B cell (primary cell): ENCODE measurements at regions of chr10 and their contacts with region 1.

Region 1: DNA sequence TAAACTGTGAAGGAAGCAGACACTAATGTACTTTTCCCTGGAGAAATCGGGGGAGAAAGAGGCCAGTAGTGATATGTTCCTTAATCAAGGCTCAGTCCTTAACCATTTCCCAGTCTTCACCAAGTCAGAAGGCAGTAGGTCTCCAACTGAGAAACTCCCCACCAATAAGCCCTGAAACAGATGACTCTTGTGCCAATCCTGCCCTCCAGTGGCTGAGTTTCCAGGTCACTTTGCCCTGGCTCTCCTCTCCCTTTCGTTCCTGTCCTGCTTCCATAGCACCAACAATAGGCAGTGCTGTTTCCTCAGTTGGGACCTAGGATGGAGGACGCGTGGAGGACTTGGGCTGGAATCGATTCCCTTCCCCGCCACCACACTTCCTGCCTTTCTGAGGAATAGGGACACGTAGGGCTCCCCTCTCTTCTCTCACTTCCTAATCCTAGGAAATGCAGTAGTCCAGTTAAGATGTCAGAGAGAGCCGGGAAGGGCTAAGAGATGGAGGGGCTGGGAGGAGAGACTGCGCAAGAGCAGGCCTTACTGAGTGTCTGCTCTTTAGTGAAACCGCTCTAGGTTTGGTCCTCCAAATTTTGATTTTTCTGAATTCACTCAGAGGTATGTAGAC is 23.4 kb downstream of the ATOH7 start:
- DNase-seq: no peak
- ATAC-seq: no peak
- H3K4me3 ChIP-seq: no peak overlapping the region
- H3K4me3 Mint-ChIP-seq: no peak overlapping the region
- H3K27ac ChIP-seq: no peak overlapping the region
- H3K27ac Mint-ChIP-seq: no peak overlapping the region
- H3K4me1 ChIP-seq: no peaks in the 10 kb centered on the region
- H3K4me1 Mint-ChIP-seq: no peaks in the 10 kb centered on the region
- H3K27me3 ChIP-seq: no peaks in the 10 kb centered on the region
- H3K27me3 Mint-ChIP-seq: peaks cover 17% of the 10 kb centered on the region
- CTCF ChIP-seq: no peak

Region 2: DNA sequence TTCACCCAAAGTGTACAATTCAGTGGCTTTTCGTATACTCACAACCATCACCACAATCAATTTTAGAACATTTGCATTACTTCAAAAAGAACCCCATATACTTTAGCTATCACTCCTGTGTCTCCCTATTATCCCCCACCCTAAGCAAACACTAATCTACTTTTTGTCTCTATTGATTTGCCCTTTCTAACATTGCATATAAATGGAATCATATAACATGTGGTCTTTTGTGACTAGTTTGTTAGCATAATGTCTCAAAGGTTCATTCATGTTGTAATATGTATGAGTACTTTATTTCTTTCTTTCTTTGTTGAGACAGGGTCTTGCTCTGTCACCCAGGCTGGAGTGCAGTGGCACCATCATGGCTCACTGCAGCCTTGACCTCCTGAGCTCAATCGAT is 349.6 kb before region 1 on chr10:
- CTCF ChIA-PET with region 1: interaction called, 8 read pairs
- POLR2A ChIA-PET with region 1: no interaction called
- intact Hi-C with region 1: loop called (anchors 2 kb)
- DNase-seq: no peak
- ATAC-seq: no peak
- H3K4me3 ChIP-seq: no peak overlapping the region
- H3K4me3 Mint-ChIP-seq: no peak overlapping the region
- H3K27ac ChIP-seq: no peak overlapping the region
- H3K27ac Mint-ChIP-seq: no peak overlapping the region
- H3K4me1 ChIP-seq: peaks cover under 1 to 5% of the 10 kb centered on the region in 2 donors
- H3K4me1 Mint-ChIP-seq: peaks cover 10% of the 10 kb centered on the region
- H3K27me3 ChIP-seq: no peaks in the 10 kb centered on the region
- H3K27me3 Mint-ChIP-seq: no peaks in the 10 kb centered on the region
- CTCF ChIP-seq: no peak

Region 3: DNA sequence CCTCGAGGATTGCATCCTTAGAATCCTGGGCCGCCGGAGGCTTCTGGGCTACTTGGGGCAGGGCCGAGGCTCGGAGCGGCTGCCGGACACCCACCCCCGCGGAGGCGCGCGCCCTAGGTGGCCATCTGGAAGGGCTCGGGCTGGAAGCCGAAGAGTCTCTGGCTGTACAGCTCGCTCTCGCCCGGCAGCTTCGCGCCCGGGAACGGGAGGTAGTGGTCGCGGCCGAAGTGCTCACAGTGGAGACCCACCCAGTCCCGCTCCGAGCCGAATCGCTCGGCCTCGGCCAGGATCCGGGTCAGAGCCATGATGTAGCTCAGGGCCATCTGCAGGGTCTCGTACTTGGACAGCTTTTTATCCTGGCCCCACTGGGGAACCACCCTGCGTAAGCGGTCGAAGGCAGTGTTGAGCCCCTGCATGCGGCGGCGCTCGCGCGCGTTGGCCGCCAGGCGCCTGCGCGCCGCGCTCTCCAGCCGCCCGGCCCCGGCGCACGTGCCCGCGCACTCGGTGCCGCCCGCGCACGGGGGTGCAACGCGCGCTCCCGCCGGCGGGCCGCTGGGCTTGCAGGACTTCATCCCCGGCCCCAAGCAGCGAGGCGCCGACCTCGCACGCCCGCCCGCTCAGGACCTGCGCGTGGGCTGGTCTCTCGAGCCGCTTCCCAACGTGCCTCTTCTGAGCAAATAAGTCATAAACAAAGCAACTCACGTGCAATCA is 22.7 kb after region 1 on chr10:
- CTCF ChIA-PET with region 1: interaction called, 12 read pairs
- POLR2A ChIA-PET with region 1: no interaction called
- intact Hi-C with region 1: no loop called
- DNase-seq: peak; percentile 65
- ATAC-seq: peak; percentile 89
- H3K4me3 ChIP-seq: peak overlapping the region; percentile 41 to 71 (median 63)
- H3K4me3 Mint-ChIP-seq: peak overlapping the region; percentile 77
- H3K27ac ChIP-seq: no peak overlapping the region
- H3K27ac Mint-ChIP-seq: no peak overlapping the region
- H3K4me1 ChIP-seq: peaks cover 10 to 12% of the 10 kb centered on the region in 2 donors
- H3K4me1 Mint-ChIP-seq: peaks cover 8% of the 10 kb centered on the region
- H3K27me3 ChIP-seq: peaks cover 0 to 31% (median 27%) of the 10 kb centered on the region in 4 experiments
- H3K27me3 Mint-ChIP-seq: peaks cover 41% of the 10 kb centered on the region
- CTCF ChIP-seq: no peak

Region 4: GRCh38 chr10:68348265-68348741 is 139.8 kb after region 1 on chr10:
- CTCF ChIA-PET with region 1: interaction called, 17 read pairs
- POLR2A ChIA-PET with region 1: no interaction called
- intact Hi-C with region 1: no loop called
- DNase-seq: peak; percentile 60
- ATAC-seq: peak; percentile 68
- H3K4me3 ChIP-seq: no peak overlapping the region
- H3K4me3 Mint-ChIP-seq: no peak overlapping the region
- H3K27ac ChIP-seq: peak overlapping the region in 1 of 2 donors; percentile 48
- H3K27ac Mint-ChIP-seq: peak overlapping the region; percentile 70
- H3K4me1 ChIP-seq: no peaks in the 10 kb centered on the region
- H3K4me1 Mint-ChIP-seq: no peaks in the 10 kb centered on the region
- H3K27me3 ChIP-seq: no peaks in the 10 kb centered on the region
- H3K27me3 Mint-ChIP-seq: no peaks in the 10 kb centered on the region
- CTCF ChIP-seq: peak; percentile 80